ENCODE measurements at regions of chr2 and their contacts with region 1.

Region 1: DNA sequence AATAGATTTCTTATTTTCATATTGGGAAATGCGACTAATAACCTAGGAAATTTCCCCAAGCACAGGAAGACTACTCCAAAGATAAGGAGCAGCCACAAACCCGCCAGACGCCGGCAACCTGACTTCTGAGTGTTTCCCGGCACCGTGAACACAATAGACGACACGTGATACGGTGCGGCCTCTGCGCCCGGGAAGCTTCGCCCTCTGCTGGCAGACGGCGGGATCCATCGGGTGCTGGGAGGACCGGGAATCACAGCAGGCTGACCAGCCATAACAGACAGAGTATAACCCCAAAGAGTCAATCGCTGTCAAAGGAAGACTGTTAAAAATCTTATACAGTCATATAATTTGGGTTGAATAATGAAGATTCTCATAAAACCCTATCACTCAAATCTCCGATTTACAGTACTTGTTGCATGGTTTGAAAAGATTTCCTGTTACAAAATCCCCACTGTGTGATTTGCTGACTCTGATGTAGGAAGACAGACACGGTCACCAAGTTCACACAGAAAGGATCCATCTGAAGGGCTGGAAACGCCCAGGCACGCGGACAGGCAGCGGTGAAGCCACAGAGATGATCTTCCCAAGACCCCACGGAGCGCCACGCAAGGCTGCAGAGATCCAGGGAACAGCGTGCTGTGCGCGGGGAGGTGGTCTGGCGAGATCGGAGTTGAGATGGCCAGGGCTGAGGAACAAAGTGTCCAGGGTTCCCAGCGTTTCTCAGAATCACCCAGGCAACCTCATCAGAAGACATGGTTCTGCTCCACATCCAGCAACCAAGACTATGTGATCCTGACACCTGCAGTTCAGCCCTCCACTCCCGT is 73.8 kb downstream of the EIPR1 start:
- DNase-seq: peak; percentile 67
- H3K4me3 Mint-ChIP-seq: no peak overlapping the region
- H3K27ac Mint-ChIP-seq: peak overlapping the region; percentile 12
- H3K4me1 Mint-ChIP-seq: peaks cover 14% of the 10 kb centered on the region
- H3K27me3 Mint-ChIP-seq: no peaks in the 10 kb centered on the region

Region 2: GRCh38 chr2:3001615-3002560 is 301.9 kb before region 1 on chr2:
- intact Hi-C with region 1: loop called (anchors 1 kb)
- DNase-seq: no peak
- H3K4me3 Mint-ChIP-seq: no peak overlapping the region
- H3K27ac Mint-ChIP-seq: no peak overlapping the region
- H3K4me1 Mint-ChIP-seq: no peaks in the 10 kb centered on the region
- H3K27me3 Mint-ChIP-seq: peaks cover 5% of the 10 kb centered on the region

Region 3: GRCh38 chr2:3114406-3115185 is 189.2 kb before region 1 on chr2:
- intact Hi-C with region 1: loop called (anchors 5 kb)
- DNase-seq: no peak
- H3K4me3 Mint-ChIP-seq: no peak overlapping the region
- H3K27ac Mint-ChIP-seq: no peak overlapping the region
- H3K4me1 Mint-ChIP-seq: no peaks in the 10 kb centered on the region
- H3K27me3 Mint-ChIP-seq: no peaks in the 10 kb centered on the region

Region 4: DNA sequence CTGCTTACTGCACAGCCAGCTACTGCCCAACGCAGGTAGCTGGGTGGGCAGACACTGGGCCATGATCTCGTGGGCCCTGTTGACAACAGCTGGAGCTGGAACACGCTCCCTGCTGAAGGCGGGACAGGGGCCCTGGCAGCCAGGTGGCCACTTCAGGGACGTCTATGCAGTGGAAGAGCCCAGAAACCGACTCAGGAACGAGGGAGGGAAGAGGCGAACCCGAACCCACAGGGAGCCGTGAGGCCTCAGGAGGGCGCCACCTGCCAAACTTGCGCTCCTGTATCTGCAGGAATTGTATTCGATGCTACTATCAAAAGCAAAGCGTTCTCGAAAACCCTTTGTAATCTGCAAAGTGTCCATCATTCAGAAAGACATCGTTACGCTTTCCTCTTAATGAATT is 124.6 kb before region 1 on chr2:
- intact Hi-C with region 1: loop called (anchors 1 kb)
- DNase-seq: no peak
- H3K4me3 Mint-ChIP-seq: no peak overlapping the region
- H3K27ac Mint-ChIP-seq: no peak overlapping the region
- H3K4me1 Mint-ChIP-seq: no peaks in the 10 kb centered on the region
- H3K27me3 Mint-ChIP-seq: no peaks in the 10 kb centered on the region

Region 5: DNA sequence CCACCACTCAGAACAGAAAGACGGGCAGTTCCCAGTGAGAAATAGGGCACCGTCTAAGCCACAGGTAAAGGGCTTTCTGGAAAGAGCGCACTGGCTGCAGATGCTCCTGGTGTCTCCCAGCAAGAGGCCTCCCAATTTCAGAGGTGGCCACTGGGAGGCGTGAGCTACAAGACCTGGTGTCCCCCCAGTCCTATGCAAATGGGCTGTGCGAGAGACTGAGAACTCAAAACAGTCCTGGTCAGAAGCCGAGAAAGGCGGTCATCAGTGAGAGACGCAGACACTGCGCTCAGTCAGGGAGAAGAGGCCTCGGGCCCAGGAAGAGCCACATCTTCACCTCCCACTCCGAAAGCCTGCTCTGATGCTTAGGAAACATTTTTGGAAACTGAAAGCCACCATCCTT is 105.7 kb before region 1 on chr2:
- intact Hi-C with region 1: loop called (anchors 1 kb)
- DNase-seq: no peak
- H3K4me3 Mint-ChIP-seq: no peak overlapping the region
- H3K27ac Mint-ChIP-seq: no peak overlapping the region
- H3K4me1 Mint-ChIP-seq: peaks cover 3% of the 10 kb centered on the region
- H3K27me3 Mint-ChIP-seq: no peaks in the 10 kb centered on the region

Region 6: DNA sequence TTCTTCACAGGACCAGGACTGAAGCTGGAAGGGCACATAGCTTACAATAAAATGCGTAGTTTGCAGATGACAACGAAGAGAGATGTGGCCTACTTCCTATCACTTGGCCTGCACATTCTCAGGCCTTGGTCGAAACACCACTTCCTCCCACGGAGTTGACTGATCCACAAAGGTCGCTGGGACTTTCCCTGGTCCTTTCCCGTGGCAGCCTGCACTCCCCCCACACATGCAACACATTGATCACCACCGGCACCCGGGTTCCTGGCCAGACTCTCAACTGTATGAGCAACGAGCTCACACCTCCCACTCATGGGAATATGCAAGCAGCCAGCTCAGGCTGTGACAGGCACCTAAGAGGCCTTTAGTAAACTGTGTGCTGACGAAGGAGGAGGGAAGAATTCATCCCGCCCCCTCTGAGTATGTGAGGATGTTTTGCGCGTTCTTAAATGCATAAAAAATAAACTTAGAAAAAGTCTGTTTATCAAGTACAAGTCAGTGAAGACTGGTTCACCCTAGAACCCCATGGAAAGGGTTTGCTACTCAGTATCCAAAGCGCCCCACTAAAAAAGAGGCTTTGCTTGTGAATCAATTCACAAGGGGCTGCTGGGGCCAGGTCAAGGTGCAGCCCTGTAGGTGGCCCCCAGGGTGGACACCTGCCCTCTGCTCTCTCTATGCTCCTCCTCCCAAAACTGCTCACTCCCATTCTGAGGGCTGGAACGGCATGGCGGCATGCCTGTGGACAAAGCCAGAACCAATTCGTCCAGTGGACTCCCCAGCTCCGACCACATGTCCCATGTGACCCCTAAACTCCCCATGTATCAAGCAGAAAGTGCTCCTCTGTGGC is 80.5 kb before region 1 on chr2:
- intact Hi-C with region 1: loop called (anchors 1 kb)
- DNase-seq: peak; percentile 75
- H3K4me3 Mint-ChIP-seq: peak overlapping the region; percentile 40
- H3K27ac Mint-ChIP-seq: peak overlapping the region; percentile 100
- H3K4me1 Mint-ChIP-seq: peaks cover 61% of the 10 kb centered on the region
- H3K27me3 Mint-ChIP-seq: no peaks in the 10 kb centered on the region

Region 7: DNA sequence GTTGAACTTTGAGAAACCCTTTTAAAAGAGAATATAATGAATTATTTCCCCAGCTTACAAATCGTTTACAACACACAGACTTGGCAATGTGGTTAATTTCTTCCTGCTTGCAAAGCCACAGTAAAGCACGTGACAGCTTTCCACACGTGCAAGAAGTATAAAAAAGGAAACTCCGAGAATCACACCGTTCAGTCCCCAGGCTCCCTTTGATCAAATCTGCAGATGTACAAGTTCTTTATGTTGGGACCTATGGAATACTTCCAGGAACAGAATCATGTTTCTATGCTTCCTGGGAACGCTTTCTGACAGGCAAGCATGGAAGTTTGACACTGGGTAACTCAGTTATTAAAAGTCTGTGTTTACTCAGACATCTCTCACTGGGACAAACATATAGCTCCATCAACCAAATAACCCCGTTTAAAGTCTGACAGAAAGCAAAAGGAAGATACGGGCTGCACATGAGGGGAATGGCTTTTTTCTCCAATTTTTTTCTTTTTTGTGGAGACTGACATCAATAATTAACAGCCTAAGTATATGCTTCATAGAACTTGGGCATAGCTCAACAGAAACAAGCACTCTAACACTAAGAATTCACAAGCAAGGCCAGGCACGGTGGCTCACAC is 60.9 kb before region 1 on chr2:
- intact Hi-C with region 1: loop called (anchors 5 kb)
- DNase-seq: peak; percentile 16
- H3K4me3 Mint-ChIP-seq: no peak overlapping the region
- H3K27ac Mint-ChIP-seq: no peak overlapping the region
- H3K4me1 Mint-ChIP-seq: peaks cover 25% of the 10 kb centered on the region
- H3K27me3 Mint-ChIP-seq: no peaks in the 10 kb centered on the region

Region 8: DNA sequence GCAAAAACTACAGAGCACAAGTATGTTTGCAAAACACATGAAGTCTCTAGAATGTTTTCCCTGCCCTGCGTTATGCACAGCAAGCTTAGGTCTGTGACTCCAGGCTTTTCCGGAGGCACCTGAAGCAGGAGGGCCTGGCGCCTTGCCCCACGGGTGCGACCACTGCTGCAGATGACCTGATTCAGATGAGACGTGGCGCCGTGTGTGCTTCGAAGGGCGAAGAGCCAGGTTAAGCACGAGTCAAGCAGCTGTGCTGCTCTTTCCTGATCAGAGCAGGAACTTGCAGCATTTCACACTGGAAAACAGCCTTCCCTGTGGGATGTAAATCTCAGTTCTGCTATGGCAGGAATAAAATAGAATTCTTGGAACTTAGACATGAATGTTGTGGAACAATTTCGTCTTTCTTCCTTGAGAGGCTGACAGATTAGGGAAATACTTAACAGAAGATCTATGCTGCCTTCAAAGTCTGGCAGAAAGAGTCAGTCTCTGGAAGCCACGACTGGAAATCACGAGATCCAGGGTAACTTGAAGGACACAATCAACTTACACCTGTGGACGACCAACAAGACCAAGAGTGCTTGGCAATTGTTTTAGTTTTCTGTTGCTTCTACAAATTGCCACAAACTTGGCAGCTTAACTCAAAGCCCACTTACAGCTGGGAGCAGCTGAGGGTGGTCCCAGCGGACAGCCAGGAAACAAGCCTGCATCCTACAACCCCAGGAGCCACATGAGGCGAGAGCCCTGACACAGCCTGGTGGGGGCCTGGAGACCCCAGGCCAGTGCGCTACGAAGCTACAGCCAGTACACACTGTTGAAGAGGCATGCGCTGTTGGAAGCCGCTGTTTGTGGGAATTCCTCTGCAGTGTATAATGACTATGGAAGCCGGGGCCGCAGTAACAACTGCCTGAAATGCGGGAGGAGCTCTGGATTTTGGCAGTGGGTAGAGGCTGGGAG is 30.9 kb after region 1 on chr2:
- intact Hi-C with region 1: no loop called
- DNase-seq: no peak
- H3K4me3 Mint-ChIP-seq: no peak overlapping the region
- H3K27ac Mint-ChIP-seq: no peak overlapping the region
- H3K4me1 Mint-ChIP-seq: no peaks in the 10 kb centered on the region
- H3K27me3 Mint-ChIP-seq: no peaks in the 10 kb centered on the region